Vagina (tissue), 2 donors: ENCODE measurements at regions of chr3 and their contacts with region 1.

Region 1: DNA sequence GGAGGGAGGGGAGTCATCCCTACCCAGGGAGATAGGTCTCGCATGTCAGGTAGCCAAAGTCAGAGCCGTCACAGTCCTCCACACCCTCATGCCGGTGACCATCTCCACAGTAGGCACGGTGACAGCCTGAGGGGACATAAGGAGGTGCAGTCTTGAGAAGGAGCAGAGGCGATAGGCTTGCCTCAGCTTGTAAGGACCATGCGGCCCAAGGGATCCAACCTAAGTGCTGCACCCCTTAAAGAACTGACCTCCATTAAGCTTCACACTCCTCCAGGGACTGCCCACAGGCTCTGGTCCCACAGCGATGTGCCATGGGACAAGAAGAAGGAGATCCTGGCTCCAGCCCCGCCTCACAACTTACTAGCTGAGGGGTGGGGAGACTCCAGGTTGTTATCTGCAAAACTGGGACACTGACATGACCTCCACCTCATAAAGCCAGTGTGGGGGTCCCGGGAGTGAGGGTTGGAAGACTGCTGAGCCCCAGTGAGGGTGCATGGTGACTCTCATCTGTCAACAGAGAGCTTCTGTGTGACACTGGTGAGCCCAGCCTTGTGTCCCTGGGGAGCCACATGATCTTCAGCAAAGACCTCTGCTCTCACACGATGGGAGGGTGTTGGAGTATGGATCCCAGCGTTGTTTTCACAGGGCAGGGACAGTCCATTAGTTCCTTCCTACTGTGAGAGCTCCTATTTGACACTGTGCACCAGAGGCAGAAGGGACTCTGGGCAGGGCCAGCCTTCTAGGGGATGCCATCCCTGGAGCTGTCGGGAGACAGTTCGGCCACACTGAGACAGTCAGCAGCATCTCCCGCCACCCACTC is 26.6 kb downstream of the EAF1 start:
- DNase-seq: no peak
- H3K4me3 ChIP-seq: no peak overlapping the region
- H3K27ac ChIP-seq: no peak overlapping the region
- H3K4me1 ChIP-seq: no peaks in the 10 kb centered on the region
- H3K27me3 ChIP-seq: no peaks in the 10 kb centered on the region
- CTCF ChIP-seq: no peak
- POLR2A ChIP-seq: no peak

Region 2: GRCh38 chr3:15228147-15228546 is 225.9 kb before region 1 on chr3:
- intact Hi-C with region 1: no loop called
- DNase-seq: no peak
- H3K4me3 ChIP-seq: no peak overlapping the region
- H3K27ac ChIP-seq: no peak overlapping the region
- H3K4me1 ChIP-seq: no peaks in the 10 kb centered on the region
- H3K27me3 ChIP-seq: no peaks in the 10 kb centered on the region
- CTCF ChIP-seq: no peak
- POLR2A ChIP-seq: no peak

Region 3: DNA sequence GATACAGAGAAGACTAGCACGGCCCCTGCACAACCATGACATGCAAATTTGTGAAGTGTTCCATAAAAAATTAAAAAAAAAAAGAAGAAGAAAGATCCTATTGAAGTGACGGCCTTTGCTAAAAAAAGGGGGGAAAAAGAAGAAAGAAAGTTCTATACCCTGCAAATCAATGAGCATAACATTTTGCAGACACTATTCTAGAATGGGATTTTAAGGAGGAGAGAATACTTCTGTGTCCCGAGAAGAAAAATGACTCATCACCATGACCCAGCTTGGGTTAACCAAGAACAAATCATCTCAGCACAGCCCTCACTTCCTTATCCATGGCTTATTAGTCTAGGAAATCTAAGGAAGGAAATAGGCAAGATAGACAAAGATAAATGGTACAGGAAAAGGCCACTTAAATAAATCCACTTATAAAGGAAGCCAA is 114.2 kb before region 1 on chr3:
- intact Hi-C with region 1: no loop called
- DNase-seq: no peak
- H3K4me3 ChIP-seq: no peak overlapping the region
- H3K27ac ChIP-seq: no peak overlapping the region
- H3K4me1 ChIP-seq: peaks cover 7% of the 10 kb centered on the region
- H3K27me3 ChIP-seq: no peaks in the 10 kb centered on the region
- CTCF ChIP-seq: no peak
- POLR2A ChIP-seq: no peak

Region 4: GRCh38 chr3:15512166-15512565 is 58.1 kb after region 1 on chr3:
- intact Hi-C with region 1: loop called (anchors 5 kb)
- DNase-seq: no peak
- H3K4me3 ChIP-seq: no peak overlapping the region
- H3K27ac ChIP-seq: no peak overlapping the region
- H3K4me1 ChIP-seq: peaks cover 5% of the 10 kb centered on the region
- H3K27me3 ChIP-seq: no peaks in the 10 kb centered on the region
- CTCF ChIP-seq: no peak
- POLR2A ChIP-seq: no peak